Endothelial cell of umbilical vein (primary cell): ENCODE measurements at regions of chr13 and their contacts with region 1.

Region 1: GRCh38 chr13:113545455-113545930 is 39.1 kb upstream of the TFDP1 start:
- DNase-seq: peak; percentile 52
- H3K4me3 ChIP-seq: no peak overlapping the region
- H3K27ac ChIP-seq: peak overlapping the region; percentile 78
- H3K4me1 ChIP-seq: peaks cover 30% of the 10 kb centered on the region
- H3K27me3 ChIP-seq: no peaks in the 10 kb centered on the region
- CTCF ChIP-seq: no peak
- POLR2A ChIP-seq: no peak

Region 2: DNA sequence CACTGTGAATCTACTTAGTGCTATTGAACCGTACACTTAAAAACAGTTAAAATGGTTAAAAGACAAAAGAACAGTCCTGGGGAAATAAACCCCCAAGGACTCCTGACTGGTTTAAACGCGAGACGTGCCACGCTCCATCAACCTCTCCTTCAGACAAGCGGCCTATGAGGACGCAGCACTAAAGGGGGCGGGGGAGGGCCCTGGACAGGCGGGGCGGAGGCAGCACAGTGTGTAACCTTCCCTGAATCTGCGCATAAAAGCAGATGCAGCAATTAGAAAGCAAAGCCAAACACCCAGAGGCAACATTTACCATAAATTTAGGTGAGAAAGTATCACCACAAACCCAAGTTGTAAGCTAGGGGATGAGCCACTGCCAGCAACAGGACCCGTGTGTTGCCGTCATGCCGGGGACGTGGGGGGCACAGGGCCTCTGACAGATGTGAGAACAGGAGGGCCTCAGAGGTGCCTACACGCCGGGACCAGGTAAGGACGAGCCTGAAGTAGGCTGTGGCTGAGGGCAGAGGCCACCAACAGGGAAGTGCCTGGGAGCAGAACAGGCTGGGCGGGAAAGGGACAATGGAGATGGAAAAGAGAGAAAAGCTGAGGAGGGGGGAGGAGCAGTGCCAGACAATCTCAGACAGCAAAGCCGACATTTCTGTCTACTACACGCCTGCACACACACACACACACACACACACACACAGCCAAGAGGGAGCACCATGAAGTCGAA is 76.9 kb before region 1 on chr13:
- CTCF ChIA-PET with region 1: no interaction called
- POLR2A ChIA-PET with region 1: no interaction called
- dilution Hi-C with region 1: no loop called
- intact Hi-C with region 1: no loop called
- DNase-seq: no peak
- H3K4me3 ChIP-seq: no peak overlapping the region
- H3K27ac ChIP-seq: no peak overlapping the region
- H3K4me1 ChIP-seq: peaks cover 5% of the 10 kb centered on the region
- H3K27me3 ChIP-seq: no peaks in the 10 kb centered on the region
- CTCF ChIP-seq: no peak
- POLR2A ChIP-seq: no peak

Region 3: GRCh38 chr13:113584205-113584869 is 38.8 kb after region 1 on chr13 and contains the start of gene TFDP1:
- CTCF ChIA-PET with region 1: no interaction called
- POLR2A ChIA-PET with region 1: no interaction called
- dilution Hi-C with region 1: no loop called
- intact Hi-C with region 1: loop called (anchors 2 kb)
- DNase-seq: peak; percentile 85
- H3K4me3 ChIP-seq: peak within 1 kb of the TSS; percentile 60 to 73 (median 63)
- H3K27ac ChIP-seq: peak within 1 kb of the TSS; percentile 40
- H3K4me1 ChIP-seq: peaks cover 7% of the 10 kb centered on the region
- H3K27me3 ChIP-seq: peaks cover 2 to 8% of the 10 kb centered on the region in 2 experiments
- CTCF ChIP-seq: no peak
- POLR2A ChIP-seq: peak; percentile 52
- total RNA-seq, gene TFDP1: 131 and 137 TPM in 2 replicates